Esophagus muscularis mucosa (tissue), 4 donors: ENCODE measurements at regions of chrX and their contacts with region 1.

Region 1: DNA sequence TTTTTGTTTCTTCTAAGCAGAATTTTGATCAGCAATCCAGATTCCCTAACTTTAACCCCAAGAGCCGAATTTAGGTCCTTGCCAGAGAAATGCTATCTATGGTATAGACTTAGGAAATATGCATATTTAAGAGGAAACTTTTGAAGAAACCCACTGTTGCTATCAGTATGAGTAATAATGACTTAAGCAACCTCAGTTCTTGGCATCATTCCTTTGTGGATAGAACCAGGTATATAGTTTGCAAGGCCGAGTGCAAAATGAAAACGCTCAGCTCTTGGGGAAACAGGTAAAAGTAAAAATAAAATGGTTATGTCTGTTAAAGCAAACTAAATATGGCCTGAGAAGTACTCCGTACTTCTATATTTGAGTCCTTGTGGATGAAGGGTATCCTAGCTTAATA is 78.1 kb downstream of the ARSF start:
- DNase-seq: no peak
- H3K4me3 ChIP-seq: no peak overlapping the region
- H3K27ac ChIP-seq: no peak overlapping the region
- H3K4me1 ChIP-seq: no peaks in the 10 kb centered on the region
- H3K27me3 ChIP-seq: no peaks in the 10 kb centered on the region
- CTCF ChIP-seq: no peak
- EP300 ChIP-seq: no peak
- POLR2A ChIP-seq: no peak

Region 2: GRCh38 chrX:3176439-3176820 is 57.1 kb after region 1 on chrX:
- intact Hi-C with region 1: no loop called
- DNase-seq: no peak
- H3K4me3 ChIP-seq: no peak overlapping the region
- H3K27ac ChIP-seq: no peak overlapping the region
- H3K4me1 ChIP-seq: no peaks in the 10 kb centered on the region
- H3K27me3 ChIP-seq: no peaks in the 10 kb centered on the region
- CTCF ChIP-seq: no peak
- EP300 ChIP-seq: no peak
- POLR2A ChIP-seq: no peak

Region 3: DNA sequence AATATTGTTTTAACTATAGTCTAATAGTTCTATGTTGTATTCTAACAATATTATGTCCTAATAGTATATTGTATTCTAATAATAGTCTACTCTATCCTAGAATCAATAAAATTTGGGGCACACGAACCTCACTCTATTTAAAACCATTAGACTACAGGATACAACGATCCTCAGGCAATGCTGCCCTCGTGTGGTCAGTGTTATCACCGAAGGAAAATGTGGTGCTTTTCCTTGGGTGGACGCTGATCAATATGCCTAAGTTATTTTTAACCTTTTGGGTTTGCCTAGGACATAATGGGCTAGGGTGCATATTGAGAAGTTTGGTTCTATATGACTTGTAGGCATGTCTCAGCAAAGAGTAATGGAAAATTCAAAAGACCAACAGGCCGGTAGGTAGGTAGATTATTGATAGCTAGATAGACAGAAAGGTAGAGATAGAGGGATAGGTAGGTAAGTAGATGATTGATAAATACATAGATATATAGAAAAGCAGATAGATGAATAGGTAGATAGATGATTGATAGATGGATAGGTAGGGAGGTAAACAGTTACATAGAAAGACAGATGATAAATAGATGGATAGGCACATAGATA is 519.0 kb after region 1 on chrX:
- intact Hi-C with region 1: loop called (anchors 10 kb)
- DNase-seq: no peak
- H3K4me3 ChIP-seq: no peak overlapping the region
- H3K27ac ChIP-seq: no peak overlapping the region
- H3K4me1 ChIP-seq: no peaks in the 10 kb centered on the region
- H3K27me3 ChIP-seq: no peaks in the 10 kb centered on the region
- CTCF ChIP-seq: peak; percentile 22 to 46 (median 35)
- EP300 ChIP-seq: no peak
- POLR2A ChIP-seq: no peak